ENCODE measurements at regions of chr13 and their contacts with region 1.

Region 1: DNA sequence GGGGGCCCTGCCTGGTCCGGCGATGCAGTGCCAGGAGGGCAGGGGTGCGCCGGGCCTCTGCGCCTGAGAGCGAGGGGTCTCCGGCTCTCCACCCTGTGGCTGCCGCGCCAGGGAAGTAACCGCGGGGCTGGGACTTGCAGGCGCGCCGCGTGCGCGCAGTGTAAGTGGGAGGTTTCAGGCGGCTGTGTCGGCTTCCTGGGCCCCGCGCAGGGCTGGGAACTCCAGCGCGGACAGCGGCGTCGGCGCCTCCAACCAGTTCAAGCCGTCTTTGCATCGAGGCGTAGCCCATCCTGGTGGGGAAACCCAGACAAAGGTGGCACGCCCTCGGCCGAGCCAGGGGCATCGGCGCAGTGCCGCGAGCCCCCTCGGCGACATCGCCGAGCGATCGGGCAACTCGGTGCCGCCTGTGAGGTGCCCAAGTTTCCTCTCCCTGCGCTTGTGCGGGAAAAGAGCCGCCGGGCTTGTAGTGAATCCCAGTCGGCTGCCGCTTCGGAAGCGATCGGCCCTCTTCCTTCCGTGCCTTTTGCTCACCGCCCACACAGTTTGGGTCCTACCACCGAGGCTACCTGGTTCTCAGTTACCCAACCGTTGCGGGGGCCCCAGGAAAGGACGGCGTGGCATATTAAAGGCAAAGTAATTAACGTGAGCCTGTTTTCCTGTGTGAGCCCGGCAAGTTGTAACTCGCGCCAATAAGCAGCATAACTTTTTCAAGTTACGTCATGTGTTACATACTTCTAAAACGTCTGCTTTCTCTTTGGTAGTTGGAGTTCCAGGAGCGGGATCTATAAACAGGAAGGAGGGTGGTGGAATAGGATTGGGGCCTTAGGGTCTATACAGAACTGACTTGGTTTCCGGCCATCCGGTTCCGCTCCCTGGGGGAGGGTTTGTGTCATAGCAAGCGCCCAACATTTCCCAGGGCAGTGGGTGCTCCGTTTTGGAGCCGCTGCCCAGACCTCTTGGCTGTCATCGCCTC is 1.2 kb downstream of the LRCH1 start:
- DNase-seq: no peak
- ATAC-seq: peak; percentile 78
- H3K4me3 ChIP-seq: peak overlapping the region; percentile 70
- H3K27ac ChIP-seq: peak overlapping the region; percentile 86
- H3K4me1 ChIP-seq: peaks cover 11% of the 10 kb centered on the region
- H3K27me3 ChIP-seq: no peaks in the 10 kb centered on the region
- CTCF ChIP-seq: peak in 2 of 3 experiments; percentile 20 to 52; a peak in 3 of 6 replicates
- EP300 ChIP-seq: peak in 1 of 2 experiments; percentile 30; a peak in 1 of 4 replicates
- POLR2A ChIP-seq: peak; percentile 90
- RAD21 ChIP-seq: no peak

Region 2: GRCh38 chr13:46392967-46393366 is 161.2 kb before region 1 on chr13:
- CTCF ChIA-PET with region 1: no interaction called
- POLR2A ChIA-PET with region 1: no interaction called
- RAD21 ChIA-PET with region 1: no interaction called
- SMC1A ChIA-PET with region 1: no interaction called
- in situ Hi-C with region 1: no loop called
- intact Hi-C with region 1: no loop called
- DNase-seq: no peak
- ATAC-seq: peak; percentile 35
- H3K4me3 ChIP-seq: no peak overlapping the region
- H3K27ac ChIP-seq: no peak overlapping the region
- H3K4me1 ChIP-seq: peaks cover 31% of the 10 kb centered on the region
- H3K27me3 ChIP-seq: no peaks in the 10 kb centered on the region
- CTCF ChIP-seq: no peak
- EP300 ChIP-seq: peak in 1 of 2 experiments; percentile 50; a peak in 1 of 4 replicates
- POLR2A ChIP-seq: no peak
- RAD21 ChIP-seq: no peak

Region 3: DNA sequence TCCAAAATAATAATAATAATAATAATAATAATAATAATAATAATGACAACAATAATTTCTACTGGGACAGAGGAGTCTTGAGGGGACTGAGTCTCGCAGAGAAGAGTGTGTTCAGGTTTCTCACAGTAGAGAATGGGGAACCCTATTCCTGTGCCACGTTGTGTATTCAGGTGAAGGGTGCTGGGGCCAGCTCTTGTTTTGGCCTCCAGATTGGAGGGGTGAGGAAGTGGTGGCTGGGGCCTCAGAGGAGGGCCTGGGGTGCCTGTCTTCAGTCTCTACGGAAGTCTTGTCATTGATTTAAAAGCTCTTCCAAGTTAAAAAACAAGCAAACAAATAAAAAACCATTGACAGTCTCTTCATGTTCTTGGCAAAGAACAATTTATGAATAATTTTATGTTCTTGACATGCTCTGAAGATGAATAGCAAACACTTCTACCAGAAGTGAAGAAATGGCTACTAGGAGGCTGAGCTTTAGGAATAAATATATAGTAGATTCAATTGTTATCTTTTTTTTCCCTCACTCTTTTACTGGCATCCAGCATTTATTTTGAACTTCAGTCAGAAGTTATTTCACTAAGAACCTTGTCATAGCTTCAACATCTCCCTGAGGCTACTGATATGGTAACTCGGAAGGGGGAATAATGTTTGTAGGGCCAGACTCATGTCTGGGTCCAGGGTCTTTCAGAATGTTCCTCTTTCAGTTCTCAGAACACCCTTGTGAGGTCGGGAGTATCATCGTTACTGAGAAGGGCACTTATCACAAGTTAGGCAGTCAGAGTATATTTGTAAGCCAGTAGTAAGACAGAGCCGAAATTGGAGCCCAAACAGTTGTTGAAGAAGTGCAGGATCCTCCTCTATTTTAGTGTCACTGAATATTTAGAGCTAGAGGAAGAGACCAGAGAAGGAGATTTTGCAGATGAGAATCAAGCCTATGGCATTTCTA is 11.9 kb after region 1 on chr13:
- CTCF ChIA-PET with region 1: interaction called, 39 read pairs
- POLR2A ChIA-PET with region 1: interaction called, 24 read pairs
- RAD21 ChIA-PET with region 1: interaction called, 22 read pairs
- SMC1A ChIA-PET with region 1: interaction called, 124 read pairs
- in situ Hi-C with region 1: no loop called
- intact Hi-C with region 1: no loop called
- DNase-seq: no peak
- ATAC-seq: peak; percentile 85
- H3K4me3 ChIP-seq: peak overlapping the region; percentile 4; the same call in 1 of the 2 replicates
- H3K27ac ChIP-seq: peak overlapping the region; percentile 7
- H3K4me1 ChIP-seq: peaks cover 24% of the 10 kb centered on the region
- H3K27me3 ChIP-seq: no peaks in the 10 kb centered on the region
- CTCF ChIP-seq: no peak
- EP300 ChIP-seq: no peak
- POLR2A ChIP-seq: no peak
- RAD21 ChIP-seq: no peak

Region 4: DNA sequence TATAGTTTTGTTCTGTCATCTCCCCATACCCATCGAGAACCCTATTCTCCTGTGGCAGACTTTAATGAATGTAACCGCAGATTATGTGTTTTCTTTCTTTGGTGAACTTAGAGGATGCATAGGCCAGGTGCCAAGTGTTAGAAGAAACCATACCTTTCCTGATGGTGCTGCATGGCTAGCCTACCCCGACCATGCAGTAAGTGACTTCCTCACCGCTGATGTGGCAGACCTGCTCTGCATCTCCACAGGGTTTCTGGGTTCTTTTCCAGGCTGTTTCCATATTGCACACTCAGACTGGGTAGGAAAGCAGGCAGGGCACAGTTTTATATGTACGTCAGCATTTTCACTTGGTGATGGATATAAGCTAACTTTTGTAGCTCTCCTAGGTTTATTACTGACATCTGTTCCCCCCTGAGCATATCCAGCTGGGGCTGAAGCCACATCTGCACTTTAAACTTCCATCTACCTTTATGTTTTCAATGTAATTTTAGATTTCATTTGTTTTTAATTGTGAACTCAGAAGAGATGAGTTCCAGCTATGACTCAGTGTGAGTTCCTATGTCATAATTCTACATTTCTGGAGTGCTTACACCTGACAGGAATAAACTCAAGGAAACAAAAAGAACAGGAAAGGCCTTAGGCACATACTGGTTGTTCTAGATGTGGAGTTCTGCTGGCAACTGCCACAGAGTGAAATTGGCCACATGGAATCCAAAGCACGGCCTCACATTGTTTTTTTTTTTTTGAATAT is 41.1 kb after region 1 on chr13:
- CTCF ChIA-PET with region 1: interaction called, 14 read pairs
- POLR2A ChIA-PET with region 1: interaction called, 7 read pairs
- RAD21 ChIA-PET with region 1: interaction called, 27 read pairs
- SMC1A ChIA-PET with region 1: interaction called, 39 read pairs
- in situ Hi-C with region 1: no loop called
- intact Hi-C with region 1: loop called (anchors 2 kb)
- DNase-seq: no peak
- ATAC-seq: peak; percentile 60
- H3K4me3 ChIP-seq: peak overlapping the region; percentile 12; the same call in 1 of the 2 replicates
- H3K27ac ChIP-seq: peak overlapping the region; percentile 62
- H3K4me1 ChIP-seq: peaks cover 76% of the 10 kb centered on the region
- H3K27me3 ChIP-seq: no peaks in the 10 kb centered on the region
- CTCF ChIP-seq: no peak
- EP300 ChIP-seq: no peak; a peak in 1 of 4 replicates
- POLR2A ChIP-seq: no peak
- RAD21 ChIP-seq: no peak

Region 5: GRCh38 chr13:46633416-46633815 is 79.2 kb after region 1 on chr13:
- CTCF ChIA-PET with region 1: interaction called, 17 read pairs
- POLR2A ChIA-PET with region 1: interaction called, 9 read pairs
- RAD21 ChIA-PET with region 1: interaction called, 16 read pairs
- SMC1A ChIA-PET with region 1: interaction called, 14 read pairs
- in situ Hi-C with region 1: no loop called
- intact Hi-C with region 1: no loop called
- DNase-seq: no peak
- ATAC-seq: no peak
- H3K4me3 ChIP-seq: no peak overlapping the region
- H3K27ac ChIP-seq: no peak overlapping the region
- H3K4me1 ChIP-seq: peaks cover 18% of the 10 kb centered on the region
- H3K27me3 ChIP-seq: no peaks in the 10 kb centered on the region
- CTCF ChIP-seq: no peak
- EP300 ChIP-seq: no peak
- POLR2A ChIP-seq: no peak
- RAD21 ChIP-seq: no peak

Region 6: DNA sequence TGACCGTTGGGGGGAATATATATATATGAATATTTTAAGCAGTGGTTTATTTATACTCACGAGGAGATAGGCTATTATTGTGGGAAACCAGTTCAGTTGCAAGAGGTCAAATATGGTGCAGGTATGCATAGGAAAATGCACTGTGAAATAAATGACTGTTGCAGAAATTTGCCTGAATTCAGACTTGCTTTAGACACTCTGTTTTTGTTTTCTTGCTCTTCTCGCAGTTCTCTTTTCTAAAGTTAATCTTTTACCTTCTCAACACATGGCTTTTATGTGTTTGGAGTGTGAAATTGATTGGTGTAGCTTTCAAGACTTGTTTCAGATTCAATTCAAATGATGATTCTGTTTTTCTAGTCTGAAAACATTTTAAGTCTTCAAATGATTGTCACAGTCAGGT is 108.5 kb after region 1 on chr13:
- CTCF ChIA-PET with region 1: interaction called, 14 read pairs
- POLR2A ChIA-PET with region 1: interaction called, 8 read pairs
- RAD21 ChIA-PET with region 1: interaction called, 25 read pairs
- SMC1A ChIA-PET with region 1: interaction called, 18 read pairs
- in situ Hi-C with region 1: no loop called
- intact Hi-C with region 1: loop called (anchors 5 kb)
- DNase-seq: no peak
- ATAC-seq: peak; percentile 70
- H3K4me3 ChIP-seq: no peak overlapping the region
- H3K27ac ChIP-seq: peak overlapping the region; percentile 51; the same call in 1 of the 2 replicates
- H3K4me1 ChIP-seq: peaks cover 47% of the 10 kb centered on the region
- H3K27me3 ChIP-seq: no peaks in the 10 kb centered on the region
- CTCF ChIP-seq: no peak
- EP300 ChIP-seq: peak in 1 of 2 experiments; percentile 59; a peak in 2 of 4 replicates
- POLR2A ChIP-seq: no peak
- RAD21 ChIP-seq: no peak

Region 7: DNA sequence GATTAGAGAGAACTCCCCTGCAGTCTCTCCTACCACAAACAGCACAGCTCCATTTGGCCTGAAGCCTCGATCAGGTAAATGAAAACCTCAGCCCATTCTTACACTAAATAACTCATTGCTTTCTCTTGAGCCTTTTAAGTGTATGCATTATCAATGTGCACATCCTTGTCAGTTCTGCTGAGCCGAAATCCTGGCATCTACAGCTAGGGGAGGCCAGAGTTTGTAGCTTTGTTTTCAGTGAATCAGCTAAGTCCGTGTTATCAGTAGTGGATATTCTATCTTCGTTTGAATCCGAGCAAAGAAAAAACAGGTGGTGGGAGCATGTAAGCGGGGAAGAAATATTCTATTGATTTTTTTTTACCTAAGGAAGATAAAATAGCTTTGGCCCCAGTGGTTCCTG is 158.4 kb after region 1 on chr13:
- CTCF ChIA-PET with region 1: interaction called, 11 read pairs
- POLR2A ChIA-PET with region 1: no interaction called
- RAD21 ChIA-PET with region 1: interaction called, 6 read pairs
- SMC1A ChIA-PET with region 1: interaction called, 80 read pairs
- in situ Hi-C with region 1: no loop called
- intact Hi-C with region 1: no loop called
- DNase-seq: no peak
- ATAC-seq: no peak
- H3K4me3 ChIP-seq: no peak overlapping the region
- H3K27ac ChIP-seq: no peak overlapping the region
- H3K4me1 ChIP-seq: no peaks in the 10 kb centered on the region
- H3K27me3 ChIP-seq: no peaks in the 10 kb centered on the region
- CTCF ChIP-seq: no peak
- EP300 ChIP-seq: no peak
- POLR2A ChIP-seq: no peak
- RAD21 ChIP-seq: no peak

Region 8: DNA sequence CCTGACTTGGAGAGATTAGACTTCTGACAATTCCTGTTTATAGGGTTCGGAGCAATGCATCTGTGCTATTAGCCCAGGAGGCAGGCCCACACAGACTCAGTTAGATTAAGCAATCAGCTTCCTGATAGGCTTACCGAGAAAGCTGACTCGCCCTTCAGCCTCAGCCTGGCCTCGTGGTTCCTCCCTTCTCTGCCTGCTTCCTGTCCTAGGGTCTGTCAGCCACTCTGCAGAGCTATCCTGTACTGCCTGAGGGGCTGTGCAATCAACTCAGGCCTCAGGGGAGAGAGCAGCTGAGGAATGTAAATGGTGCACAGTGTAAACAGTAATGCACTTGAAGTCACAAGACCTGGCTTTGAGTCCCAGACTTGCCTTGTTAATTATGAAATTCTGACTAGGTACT is 312.0 kb after region 1 on chr13:
- CTCF ChIA-PET with region 1: no interaction called
- POLR2A ChIA-PET with region 1: no interaction called
- RAD21 ChIA-PET with region 1: no interaction called
- SMC1A ChIA-PET with region 1: no interaction called
- in situ Hi-C with region 1: no loop called
- intact Hi-C with region 1: no loop called
- DNase-seq: no peak
- ATAC-seq: peak; percentile 33
- H3K4me3 ChIP-seq: no peak overlapping the region
- H3K27ac ChIP-seq: no peak overlapping the region
- H3K4me1 ChIP-seq: peaks cover 5% of the 10 kb centered on the region; the same call in 1 of the 2 replicates
- H3K27me3 ChIP-seq: no peaks in the 10 kb centered on the region; a peak in 1 of 4 replicates
- CTCF ChIP-seq: no peak
- EP300 ChIP-seq: no peak
- POLR2A ChIP-seq: no peak
- RAD21 ChIP-seq: no peak

Region 9: GRCh38 chr13:47094734-47095434 is 540.7 kb after region 1 on chr13:
- CTCF ChIA-PET with region 1: no interaction called
- POLR2A ChIA-PET with region 1: no interaction called
- RAD21 ChIA-PET with region 1: no interaction called
- SMC1A ChIA-PET with region 1: no interaction called
- in situ Hi-C with region 1: no loop called
- intact Hi-C with region 1: no loop called
- DNase-seq: peak; percentile 48
- ATAC-seq: peak; percentile 91
- H3K4me3 ChIP-seq: no peak overlapping the region
- H3K27ac ChIP-seq: no peak overlapping the region
- H3K4me1 ChIP-seq: peaks cover 6% of the 10 kb centered on the region; the same call in 1 of the 2 replicates
- H3K27me3 ChIP-seq: no peaks in the 10 kb centered on the region
- CTCF ChIP-seq: no peak
- EP300 ChIP-seq: 0 out of 4 replicates have a peak, but pooled peaks of 1 of the 2 experiments have one; percentile 35
- POLR2A ChIP-seq: no peak
- RAD21 ChIP-seq: no peak

Measured in GM12878 (cell line).